Right ventricle myocardium inferior (tissue), 1 donor: ENCODE measurements at regions of chr14 and their contacts with region 1.

Region 1: GRCh38 chr14:65032319-65032718 is 45.6 kb downstream of the FNTB start:
- DNase-seq: no peak
- ATAC-seq: peak; percentile 93

Region 2: DNA sequence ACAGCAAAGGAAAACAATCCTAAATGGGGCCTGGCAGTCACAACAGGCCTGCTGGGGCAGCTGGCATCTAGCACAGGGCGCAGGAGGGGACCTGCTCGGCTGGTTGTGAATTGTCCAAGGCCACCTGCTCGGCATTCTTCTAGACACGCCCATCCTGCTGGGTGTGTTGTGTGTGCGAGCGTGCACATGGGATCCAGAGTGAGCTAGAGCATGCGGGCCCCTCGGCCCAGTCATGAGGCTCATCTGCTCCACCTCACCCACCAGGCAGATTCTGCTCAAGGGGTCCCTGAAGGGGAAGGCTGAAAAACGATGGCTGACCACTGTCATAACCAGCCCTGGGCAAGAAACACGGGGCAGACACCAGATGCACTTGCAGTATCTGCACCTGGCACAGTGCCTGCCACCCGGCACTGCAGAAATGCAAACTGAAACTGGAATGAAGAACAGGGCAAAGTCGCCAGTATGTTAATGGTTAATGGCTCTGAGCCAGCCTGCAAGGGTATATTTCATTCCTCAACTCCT is 38.2 kb after region 1 on chr14:
- intact Hi-C with region 1: loop called (anchors 5 kb)
- DNase-seq: no peak
- ATAC-seq: peak; percentile 11

Region 3: DNA sequence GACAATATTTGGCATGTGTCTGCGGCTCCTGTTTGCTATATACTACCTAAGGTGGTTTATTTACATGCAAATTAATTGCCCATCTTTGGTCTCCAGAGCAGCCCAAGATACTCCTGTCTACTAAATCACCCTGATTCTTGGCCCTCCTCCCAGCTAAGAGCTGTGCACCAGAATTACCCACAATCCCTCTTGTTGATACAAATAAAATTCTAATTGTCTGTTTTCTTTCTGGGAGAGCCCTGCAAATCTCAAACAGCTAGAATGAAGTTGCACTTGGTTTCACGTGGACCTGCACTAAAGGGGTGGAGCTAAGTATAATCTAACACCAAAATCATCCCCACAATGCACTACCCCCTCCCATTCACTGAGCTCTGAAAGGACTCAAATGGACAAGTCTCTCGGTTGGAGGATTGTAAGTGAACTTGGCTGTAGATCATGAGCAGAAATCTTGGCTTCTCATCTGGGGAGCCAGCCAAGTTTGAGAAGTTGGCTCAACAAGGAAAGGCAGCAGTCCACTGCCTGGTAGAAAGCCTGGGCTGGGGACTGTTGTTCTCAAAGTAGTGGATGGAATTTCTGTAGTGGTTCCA is 63.4 kb after region 1 on chr14:
- intact Hi-C with region 1: loop called (anchors 5 kb)
- DNase-seq: no peak
- ATAC-seq: peak; percentile 84